ENCODE measurements at regions of chr17 and their contacts with region 1.

Region 1: GRCh38 chr17:59331129-59331928 is at the start of gene YPEL2:
- DNase-seq: peak; percentile 83
- H3K4me3 ChIP-seq: peak within 1 kb of the TSS; percentile 79 to 89 (median 81)
- H3K27ac ChIP-seq: peak within 1 kb of the TSS; percentile 8
- H3K4me1 ChIP-seq: peaks cover 24% of the 10 kb centered on the region
- H3K27me3 ChIP-seq: peaks cover 3% of the 10 kb centered on the region
- CTCF ChIP-seq: no peak
- total RNA-seq, gene YPEL2: 2.2 to 6.8 TPM

Region 2: GRCh38 chr17:59106463-59107305 is 224.6 kb before region 1 on chr17 and contains the start of gene TRIM37:
- CTCF ChIA-PET with region 1: no interaction called
- dilution Hi-C with region 1: no loop called
- in situ Hi-C with region 1: no loop called
- intact Hi-C with region 1: no loop called
- DNase-seq: peak; percentile 99
- H3K4me3 ChIP-seq: peak within 1 kb of the TSS; percentile 89 to 92 (median 90)
- H3K27ac ChIP-seq: peak within 1 kb of the TSS; percentile 94
- H3K4me1 ChIP-seq: peaks cover 7% of the 10 kb centered on the region
- H3K27me3 ChIP-seq: no peaks in the 10 kb centered on the region
- CTCF ChIP-seq: peak in 1 of 2 donors; percentile 14
- total RNA-seq, gene TRIM37: 34.2 to 42.7 TPM

Region 3: DNA sequence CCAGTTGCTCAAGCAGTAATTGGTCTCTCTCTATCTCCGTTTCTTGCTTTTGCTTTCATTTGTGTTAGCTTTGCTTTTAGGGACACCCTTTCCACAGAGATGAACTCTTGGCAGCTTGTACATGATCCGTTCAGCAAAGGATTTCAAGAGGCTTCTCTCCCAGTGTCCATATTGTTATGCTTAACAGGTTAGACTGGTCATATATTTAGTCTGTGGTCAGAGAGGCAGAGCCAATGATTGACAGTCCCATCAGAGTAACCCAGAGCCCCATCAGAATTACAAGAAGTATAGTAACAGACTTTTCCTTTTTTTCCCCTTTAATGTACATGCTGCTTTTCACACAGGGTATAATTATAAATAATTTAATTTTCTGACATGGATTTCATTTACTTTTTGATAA is 76.6 kb before region 1 on chr17:
- CTCF ChIA-PET with region 1: interaction called, 15 read pairs
- dilution Hi-C with region 1: no loop called
- in situ Hi-C with region 1: no loop called
- intact Hi-C with region 1: no loop called
- DNase-seq: no peak
- H3K4me3 ChIP-seq: no peak overlapping the region
- H3K27ac ChIP-seq: no peak overlapping the region
- H3K4me1 ChIP-seq: no peaks in the 10 kb centered on the region
- H3K27me3 ChIP-seq: no peaks in the 10 kb centered on the region
- CTCF ChIP-seq: no peak

Region 4: DNA sequence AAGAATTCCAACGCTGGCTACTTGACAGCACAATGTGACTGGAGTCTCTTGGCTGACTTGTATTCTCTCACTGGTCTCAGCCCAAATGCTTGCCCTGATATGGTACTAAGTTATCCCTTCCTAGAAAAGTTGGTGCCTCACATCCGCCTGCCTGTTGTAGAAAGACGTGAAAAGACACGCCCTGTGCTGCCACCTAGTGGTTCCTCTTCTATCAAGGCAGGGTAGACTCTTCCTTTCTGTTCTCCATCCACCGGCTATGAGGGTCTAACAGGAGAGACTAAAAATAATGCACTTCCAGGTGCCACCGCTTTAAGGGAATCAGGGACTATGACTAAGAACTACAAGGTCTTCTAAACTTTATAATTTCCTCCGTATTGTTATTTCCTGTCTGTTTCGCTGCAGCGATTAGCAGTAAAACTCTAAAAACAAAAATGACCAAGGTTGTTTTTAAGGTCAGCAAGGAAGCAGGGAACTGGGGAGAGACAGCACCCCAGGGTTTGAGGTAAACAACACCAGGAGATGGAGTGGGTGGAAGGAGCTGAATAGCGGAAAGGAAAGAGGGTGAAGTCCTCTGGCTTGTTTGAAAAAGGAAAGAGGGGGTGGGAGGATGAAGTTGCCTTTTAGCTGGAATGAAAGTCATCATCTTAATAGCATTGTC is 109.6 kb after region 1 on chr17:
- CTCF ChIA-PET with region 1: interaction called, 11 read pairs
- dilution Hi-C with region 1: no loop called
- in situ Hi-C with region 1: no loop called
- intact Hi-C with region 1: loop called (anchors 1 kb)
- DNase-seq: peak; percentile 72
- H3K4me3 ChIP-seq: no peak overlapping the region
- H3K27ac ChIP-seq: no peak overlapping the region
- H3K4me1 ChIP-seq: no peaks in the 10 kb centered on the region
- H3K27me3 ChIP-seq: no peaks in the 10 kb centered on the region
- CTCF ChIP-seq: peak; percentile 78 to 82

Region 5: GRCh38 chr17:59451706-59452105 is 120.4 kb after region 1 on chr17:
- CTCF ChIA-PET with region 1: interaction called, 29 read pairs
- dilution Hi-C with region 1: no loop called
- in situ Hi-C with region 1: no loop called
- intact Hi-C with region 1: no loop called
- DNase-seq: peak; percentile 89
- H3K4me3 ChIP-seq: no peak overlapping the region
- H3K27ac ChIP-seq: peak overlapping the region; percentile 35
- H3K4me1 ChIP-seq: peaks cover 11% of the 10 kb centered on the region
- H3K27me3 ChIP-seq: no peaks in the 10 kb centered on the region
- CTCF ChIP-seq: no peak